Caco-2 (cell line): ENCODE measurements at regions of chr15 and their contacts with region 1.

Region 1: DNA sequence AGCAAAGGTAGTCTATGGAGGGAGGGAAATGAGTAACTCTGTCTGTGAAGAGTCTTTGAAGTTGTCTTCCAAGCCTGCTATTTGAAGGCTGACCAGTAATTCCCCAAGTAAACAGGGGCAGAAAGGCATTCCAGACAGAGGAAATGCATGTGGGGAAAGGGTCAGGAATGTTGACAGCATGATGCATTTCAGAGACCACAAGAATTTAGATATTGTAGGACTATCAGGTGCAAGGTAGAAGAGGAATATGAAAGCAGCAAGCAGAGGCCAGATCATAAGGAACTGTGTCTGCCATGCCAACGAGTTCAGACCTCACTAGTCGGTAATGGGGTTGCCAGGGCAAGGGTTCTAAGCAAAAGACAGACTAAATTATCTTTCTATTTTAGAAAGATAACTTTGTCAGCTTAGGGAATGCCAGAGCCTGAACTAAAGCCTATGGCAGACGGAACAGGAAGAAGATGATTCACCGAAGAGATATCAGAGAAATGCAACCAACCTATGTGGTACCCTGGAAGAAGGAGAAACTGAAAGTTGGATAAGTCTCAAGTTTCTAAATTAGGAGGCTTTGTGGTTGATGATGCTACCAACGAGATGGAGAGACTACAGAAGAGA is 327.0 kb upstream of the RORA start:
- DNase-seq: peak in 1 of 2 experiments; percentile 8
- H3K4me3 ChIP-seq: no peak overlapping the region
- H3K4me3 Mint-ChIP-seq: no peak overlapping the region
- H3K27ac Mint-ChIP-seq: no peak overlapping the region
- H3K4me1 ChIP-seq: 0 out of 2 replicates have a peak, but pooled peaks cover 3% of the 10 kb centered on the region
- H3K4me1 Mint-ChIP-seq: peaks cover 7% of the 10 kb centered on the region
- H3K27me3 ChIP-seq: no peaks in the 10 kb centered on the region
- H3K27me3 Mint-ChIP-seq: peaks cover 4% of the 10 kb centered on the region
- CTCF ChIP-seq: no peak

Region 2: DNA sequence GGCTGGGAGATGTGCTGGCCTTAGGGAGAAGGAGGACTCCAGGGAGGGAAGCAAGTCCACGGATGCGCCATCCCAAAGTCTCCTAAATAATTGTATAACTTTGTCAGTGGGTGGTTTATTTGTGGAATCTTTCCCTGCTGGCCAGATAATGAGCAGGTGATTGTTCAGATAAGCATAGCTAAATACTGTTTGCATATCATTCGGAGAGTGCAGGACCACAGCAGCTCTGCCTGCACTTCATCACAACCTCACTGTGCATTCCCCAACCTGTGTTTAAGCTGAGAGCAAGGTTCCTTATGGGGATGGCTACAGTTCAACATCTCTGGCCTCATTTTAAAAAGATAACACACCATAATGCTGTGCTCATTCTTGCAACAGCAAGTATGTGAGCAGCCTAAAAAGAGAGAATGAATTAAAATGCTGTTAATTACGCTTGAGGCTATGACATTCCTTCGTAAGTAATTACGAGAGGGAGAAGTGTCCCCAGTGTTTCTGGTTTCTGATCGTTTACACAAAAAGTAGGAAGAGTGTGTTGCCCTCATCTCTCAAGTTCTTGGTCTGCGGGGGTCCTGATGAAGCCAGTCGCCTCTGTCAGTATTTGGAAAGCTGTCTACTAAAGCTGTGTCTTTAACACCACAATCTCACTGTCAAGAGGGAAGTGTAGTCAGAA is 55.1 kb before region 1 on chr15:
- CTCF ChIA-PET with region 1: no interaction called
- POLR2A ChIA-PET with region 1: no interaction called
- intact Hi-C with region 1: loop called (anchors 10 kb)
- DNase-seq: no peak
- H3K4me3 ChIP-seq: no peak overlapping the region
- H3K4me3 Mint-ChIP-seq: no peak overlapping the region
- H3K27ac Mint-ChIP-seq: no peak overlapping the region
- H3K4me1 ChIP-seq: no peaks in the 10 kb centered on the region
- H3K4me1 Mint-ChIP-seq: no peaks in the 10 kb centered on the region
- H3K27me3 ChIP-seq: no peaks in the 10 kb centered on the region
- H3K27me3 Mint-ChIP-seq: peaks cover 18% of the 10 kb centered on the region
- CTCF ChIP-seq: no peak